ENCODE measurements at regions of chr16 and their contacts with region 1.

Region 1: DNA sequence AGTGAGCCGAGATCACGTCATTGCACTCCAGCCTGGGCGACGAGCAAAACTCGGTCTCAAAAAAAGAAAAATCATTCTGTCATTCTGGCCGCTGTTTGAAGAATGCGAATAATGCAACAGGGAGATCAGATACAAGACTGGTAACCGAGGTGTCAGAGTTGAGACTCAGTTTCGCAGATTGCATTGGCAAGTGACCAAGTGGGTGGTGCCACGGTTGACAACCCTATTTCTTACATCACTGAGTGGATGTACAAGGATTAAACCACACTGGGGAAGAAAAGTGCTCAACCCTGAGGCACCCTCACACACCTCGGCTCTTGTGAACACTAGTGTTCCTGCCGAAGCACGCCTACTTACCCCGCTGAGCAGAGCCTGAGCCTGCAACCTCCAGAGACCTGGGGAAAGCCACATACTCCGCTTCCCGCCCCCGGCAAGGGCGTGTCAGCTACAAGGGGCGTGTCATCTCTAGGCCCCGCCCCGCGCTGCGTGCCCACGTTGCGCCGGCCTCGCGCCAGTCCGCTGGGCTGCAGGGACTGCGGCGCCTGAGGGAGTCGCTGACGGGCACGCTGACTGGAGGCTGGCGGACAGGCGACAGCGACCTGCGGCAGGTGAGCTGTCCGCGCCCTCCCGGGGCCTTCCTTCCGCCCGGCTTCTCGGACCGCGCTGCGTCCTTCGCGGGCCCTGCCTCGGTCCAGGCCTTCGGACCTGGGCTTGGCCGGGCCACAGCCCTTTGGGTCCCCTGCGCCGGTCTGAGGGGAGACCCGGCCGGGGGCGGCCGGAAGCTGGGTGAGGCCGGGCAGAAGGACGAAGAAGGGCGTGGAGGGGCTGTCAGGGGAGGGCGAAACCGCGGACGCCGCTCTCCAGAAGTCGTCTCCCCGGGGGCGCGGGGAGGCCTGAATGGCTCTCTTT is at the start of gene HMOX2:
- DNase-seq: peak; percentile 93
- H3K4me3 Mint-ChIP-seq: peak within 1 kb of the TSS; percentile 89
- H3K27ac Mint-ChIP-seq: peak within 1 kb of the TSS; percentile 89
- H3K4me1 Mint-ChIP-seq: peaks cover 21% of the 10 kb centered on the region
- H3K27me3 Mint-ChIP-seq: no peaks in the 10 kb centered on the region
- total RNA-seq, gene HMOX2: 64.7 and 68.4 TPM in 2 replicates

Region 2: GRCh38 chr16:4307215-4308037 is 168.7 kb before region 1 on chr16:
- intact Hi-C with region 1: loop called (anchors 1 kb)
- DNase-seq: peak; percentile 97
- H3K4me3 Mint-ChIP-seq: peak overlapping the region; percentile 96
- H3K27ac Mint-ChIP-seq: peak overlapping the region; percentile 96
- H3K4me1 Mint-ChIP-seq: peaks cover 22% of the 10 kb centered on the region
- H3K27me3 Mint-ChIP-seq: peaks cover 6% of the 10 kb centered on the region

Region 3: GRCh38 chr16:4425378-4426020 is 50.6 kb before region 1 on chr16 and contains the start of gene DNAJA3:
- intact Hi-C with region 1: loop called (anchors 1 kb)
- DNase-seq: peak; percentile 91
- H3K4me3 Mint-ChIP-seq: peak within 1 kb of the TSS; percentile 98
- H3K27ac Mint-ChIP-seq: peak within 1 kb of the TSS; percentile 100
- H3K4me1 Mint-ChIP-seq: peaks cover 31% of the 10 kb centered on the region
- H3K27me3 Mint-ChIP-seq: peaks cover 3% of the 10 kb centered on the region
- total RNA-seq, gene DNAJA3: 103 and 107 TPM in 2 replicates

Region 4: DNA sequence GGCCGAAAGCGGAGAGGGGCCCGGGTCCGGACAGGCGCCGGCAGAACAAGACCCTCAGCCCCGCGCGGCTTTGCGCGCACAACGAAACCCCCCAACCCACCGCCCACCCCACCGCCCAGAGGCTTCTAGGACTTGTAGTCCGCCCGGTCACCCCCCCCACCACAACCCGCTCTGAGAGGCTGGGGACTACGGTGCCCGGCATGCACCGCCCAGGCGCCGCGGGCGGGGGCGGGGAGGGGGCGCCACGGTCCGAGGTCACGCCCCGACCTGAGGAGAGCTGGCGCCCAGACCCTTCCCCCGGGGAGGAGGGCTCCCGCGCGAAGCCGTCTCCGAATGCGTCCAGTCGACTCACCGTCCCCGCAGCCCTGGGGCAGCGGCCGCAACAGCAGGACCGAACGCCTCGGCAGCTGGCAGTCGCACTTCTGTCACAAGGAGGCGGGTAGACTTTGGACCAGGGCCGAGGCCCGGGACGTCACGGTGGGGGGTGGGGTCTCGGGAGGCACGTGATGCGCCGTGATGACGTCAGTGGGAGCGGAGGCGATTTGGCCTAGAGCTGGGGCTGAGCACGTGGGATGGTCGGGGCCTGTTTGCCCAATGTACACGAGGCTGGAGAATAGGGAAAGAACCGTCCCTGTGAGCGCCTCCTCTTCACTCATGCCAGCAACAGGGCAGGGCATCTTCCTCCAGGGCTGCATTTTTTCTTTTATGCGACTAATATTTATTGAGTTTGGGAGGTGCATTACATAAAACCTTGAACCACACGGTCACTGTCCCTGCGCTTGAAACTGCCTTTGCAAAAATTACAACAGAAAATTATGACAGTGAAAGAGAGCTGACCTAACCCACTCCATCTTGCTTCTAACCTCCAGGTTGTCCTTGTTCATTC is 62.5 kb after region 1 on chr16 and contains the start of gene CDIP1:
- intact Hi-C with region 1: loop called (anchors 1 kb)
- DNase-seq: peak; percentile 86
- H3K4me3 Mint-ChIP-seq: peak within 1 kb of the TSS; percentile 80
- H3K27ac Mint-ChIP-seq: peak within 1 kb of the TSS; percentile 82
- H3K4me1 Mint-ChIP-seq: peaks cover 40% of the 10 kb centered on the region
- H3K27me3 Mint-ChIP-seq: peaks cover 5% of the 10 kb centered on the region
- total RNA-seq, gene CDIP1: 61.6 and 62.7 TPM in 2 replicates

Region 5: DNA sequence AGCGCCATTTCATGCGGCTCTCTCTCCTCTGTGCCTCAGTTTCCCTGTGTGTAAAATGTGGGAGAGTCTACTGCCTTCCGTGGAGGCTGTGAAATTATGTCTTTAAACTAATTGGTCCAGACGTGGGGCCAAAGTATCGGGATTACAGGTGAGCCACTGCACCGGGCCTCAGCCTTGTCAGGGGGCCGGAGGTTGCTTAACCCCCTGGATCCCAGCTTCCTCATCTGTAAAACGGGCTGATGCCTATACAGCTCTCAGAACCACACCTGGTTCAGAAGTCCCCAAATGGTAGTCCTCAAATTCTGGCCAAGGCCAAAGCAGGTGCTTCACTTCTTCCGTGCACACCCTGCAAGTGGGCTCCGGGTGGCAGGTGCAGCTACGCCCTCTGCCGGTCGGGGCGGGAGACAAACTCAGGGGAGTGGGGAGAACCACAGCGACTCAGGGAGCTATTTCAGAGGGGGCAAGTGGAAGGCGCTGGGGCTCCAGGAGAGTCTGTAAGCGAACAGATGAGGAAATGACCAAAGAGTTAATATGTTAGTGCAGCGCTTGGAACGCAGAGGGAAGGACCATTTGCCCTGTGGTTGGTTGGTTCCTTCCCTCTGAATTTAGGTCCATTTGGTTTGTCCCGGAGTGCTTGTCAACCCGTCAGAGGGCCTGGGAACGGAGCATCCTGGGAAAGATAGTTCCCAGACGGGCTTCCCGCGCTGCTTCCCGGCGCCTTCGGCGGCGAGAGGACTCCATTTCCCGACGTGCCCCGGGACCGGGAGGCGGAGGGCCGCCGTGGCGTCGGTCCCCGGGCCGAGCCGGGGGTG is 148.1 kb after region 1 on chr16 and contains the start of gene MGRN1:
- intact Hi-C with region 1: loop called (anchors 2 kb)
- DNase-seq: peak; percentile 93
- H3K4me3 Mint-ChIP-seq: peak within 1 kb of the TSS; percentile 99
- H3K27ac Mint-ChIP-seq: peak within 1 kb of the TSS; percentile 95
- H3K4me1 Mint-ChIP-seq: peaks cover 22% of the 10 kb centered on the region
- H3K27me3 Mint-ChIP-seq: no peaks in the 10 kb centered on the region
- total RNA-seq, gene MGRN1: 110 and 119 TPM in 2 replicates

Region 6: GRCh38 chr16:4649744-4650442 is 173.8 kb after region 1 on chr16:
- intact Hi-C with region 1: no loop called
- DNase-seq: no peak
- H3K4me3 Mint-ChIP-seq: no peak overlapping the region
- H3K27ac Mint-ChIP-seq: peak overlapping the region; percentile 7
- H3K4me1 Mint-ChIP-seq: peaks cover 27% of the 10 kb centered on the region
- H3K27me3 Mint-ChIP-seq: no peaks in the 10 kb centered on the region